Naive thymus-derived CD4-positive, alpha-beta T cell (primary cell): ENCODE measurements at regions of chr1 and their contacts with region 1.

Region 1: GRCh38 chr1:183655562-183656075 is 2.5 kb upstream of the APOBEC4 start:
- DNase-seq: peak; percentile 43 to 74 (median 65)
- ATAC-seq: peak; percentile 88
- H3K4me3 ChIP-seq: no peak overlapping the region
- H3K4me3 Mint-ChIP-seq: no peak overlapping the region
- H3K27ac ChIP-seq: no peak overlapping the region
- H3K27ac Mint-ChIP-seq: peak overlapping the region in 3 of 9 donors; percentile 4 to 60 (median 19)
- H3K4me1 ChIP-seq: peaks cover 18 to 34% of the 10 kb centered on the region in 2 donors
- H3K4me1 Mint-ChIP-seq: peaks cover 22 to 48% (median 36%) of the 10 kb centered on the region in 7 donors
- H3K27me3 ChIP-seq: no peaks in the 10 kb centered on the region
- H3K27me3 Mint-ChIP-seq: peaks cover 0 to 5% (median 0%) of the 10 kb centered on the region in 5 donors

Region 2: DNA sequence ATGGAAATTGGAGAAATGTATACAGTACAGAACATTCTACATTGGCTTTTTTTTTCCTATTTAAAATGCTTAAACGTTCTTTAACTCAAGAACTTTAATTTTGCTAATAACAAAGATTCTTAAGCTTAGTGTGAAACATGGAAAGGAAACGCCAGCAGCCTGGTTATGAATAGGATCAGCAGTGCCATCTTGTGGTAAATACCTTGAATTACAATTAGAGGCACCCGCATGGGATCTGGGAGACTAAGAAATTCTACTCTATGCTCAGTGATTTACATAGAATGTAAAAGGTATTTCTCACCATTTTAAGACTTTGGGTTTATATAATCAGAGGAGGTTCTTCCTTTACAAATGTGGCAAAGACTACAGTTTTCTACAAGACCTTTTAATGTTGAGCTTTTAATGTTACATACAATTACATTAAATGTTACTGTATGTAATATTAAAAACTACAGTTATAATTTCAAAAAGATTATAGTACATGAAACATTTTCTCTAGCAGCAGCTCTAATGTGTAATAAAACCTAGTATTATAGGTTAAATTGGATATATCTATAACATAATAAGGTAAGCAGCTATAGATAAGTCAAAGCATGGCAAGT is 29.6 kb after region 1 on chr1:
- CTCF ChIA-PET with region 1: interaction called, 32 read pairs
- POLR2A ChIA-PET with region 1: interaction called, 3 read pairs
- intact Hi-C with region 1: loop called (anchors 1 kb)
- DNase-seq: peak in 7 of 9 donors; percentile 20 to 63 (median 54)
- ATAC-seq: peak; percentile 86
- H3K4me3 ChIP-seq: no peak overlapping the region
- H3K4me3 Mint-ChIP-seq: no peak overlapping the region
- H3K27ac ChIP-seq: no peak overlapping the region
- H3K27ac Mint-ChIP-seq: no peak overlapping the region
- H3K4me1 ChIP-seq: no peaks in the 10 kb centered on the region
- H3K4me1 Mint-ChIP-seq: peaks cover 0 to 4% (median 0%) of the 10 kb centered on the region in 7 donors
- H3K27me3 ChIP-seq: no peaks in the 10 kb centered on the region
- H3K27me3 Mint-ChIP-seq: peaks cover 0 to 30% (median 0%) of the 10 kb centered on the region in 5 donors

Region 3: DNA sequence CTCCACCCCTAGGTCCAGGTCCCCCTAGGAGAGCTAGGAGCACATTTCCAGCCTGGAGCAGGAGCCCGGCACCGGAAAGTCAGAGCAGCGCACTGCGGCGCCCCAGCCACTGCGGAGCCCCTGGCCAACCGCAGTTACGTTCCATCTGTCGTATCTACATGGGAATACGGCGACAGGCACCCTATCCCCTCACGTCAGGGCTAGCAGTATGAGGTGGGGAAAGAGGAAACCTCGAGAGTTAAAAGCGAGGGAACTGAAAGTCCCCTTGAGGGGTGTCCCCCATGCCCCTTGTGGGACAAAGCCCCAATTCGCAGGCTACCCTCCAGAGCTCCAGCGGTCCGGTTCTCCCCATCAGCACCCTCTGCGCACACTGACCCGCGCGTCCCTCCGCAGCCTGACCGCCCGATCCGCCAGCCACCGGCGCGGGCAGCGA is 380.9 kb after region 1 on chr1:
- CTCF ChIA-PET with region 1: no interaction called
- POLR2A ChIA-PET with region 1: no interaction called
- intact Hi-C with region 1: loop called in 1 of 2 experiments (anchors 5 kb)
- DNase-seq: peak in 3 of 9 donors; percentile 5 to 24 (median 6)
- ATAC-seq: peak; percentile 30
- H3K4me3 ChIP-seq: peak overlapping the region; percentile 47
- H3K4me3 Mint-ChIP-seq: peak overlapping the region; percentile 35 to 75 (median 64)
- H3K27ac ChIP-seq: no peak overlapping the region
- H3K27ac Mint-ChIP-seq: no peak overlapping the region
- H3K4me1 ChIP-seq: peaks cover 6 to 18% of the 10 kb centered on the region in 2 donors
- H3K4me1 Mint-ChIP-seq: peaks cover 10 to 18% (median 15%) of the 10 kb centered on the region in 7 donors
- H3K27me3 ChIP-seq: peaks cover 0 to 3% of the 10 kb centered on the region in 2 donors
- H3K27me3 Mint-ChIP-seq: peaks cover 62 to 83% (median 70%) of the 10 kb centered on the region in 5 donors

Region 4: DNA sequence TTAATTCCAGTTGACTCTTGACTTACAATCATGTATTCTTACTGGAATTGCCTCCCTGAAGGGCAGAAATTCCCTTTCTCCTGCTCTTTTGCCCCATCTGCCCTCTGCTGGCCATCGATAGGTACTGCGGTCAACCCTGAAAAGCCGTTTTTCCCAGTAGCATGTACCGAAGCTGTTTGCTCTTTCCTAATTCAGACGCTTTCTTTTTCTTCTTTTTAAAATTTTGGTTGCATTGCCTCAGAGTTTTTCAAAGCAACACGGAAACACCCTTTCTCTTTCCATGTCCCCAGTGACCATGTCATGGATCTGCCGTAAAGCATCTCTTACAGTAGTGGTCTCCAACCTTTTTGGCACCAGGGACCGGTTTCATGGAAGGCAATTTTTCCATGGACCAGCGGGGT is 567.0 kb after region 1 on chr1:
- CTCF ChIA-PET with region 1: no interaction called
- POLR2A ChIA-PET with region 1: no interaction called
- intact Hi-C with region 1: loop called in 1 of 2 experiments (anchors 1 kb)
- DNase-seq: peak in 6 of 9 donors; percentile 11 to 31 (median 26)
- ATAC-seq: peak; percentile 60
- H3K4me3 ChIP-seq: no peak overlapping the region
- H3K4me3 Mint-ChIP-seq: peak overlapping the region in 2 of 10 donors; percentile 3 to 5
- H3K27ac ChIP-seq: no peak overlapping the region
- H3K27ac Mint-ChIP-seq: peak overlapping the region in 1 of 9 donors; percentile 6
- H3K4me1 ChIP-seq: no peaks in the 10 kb centered on the region
- H3K4me1 Mint-ChIP-seq: peaks cover 0 to 4% (median 0%) of the 10 kb centered on the region in 7 donors
- H3K27me3 ChIP-seq: no peaks in the 10 kb centered on the region
- H3K27me3 Mint-ChIP-seq: peaks cover 0 to 19% (median 9%) of the 10 kb centered on the region in 5 donors

Region 5: GRCh38 chr1:185398599-185398998 is 1743.0 kb after region 1 on chr1:
- CTCF ChIA-PET with region 1: no interaction called
- POLR2A ChIA-PET with region 1: no interaction called
- intact Hi-C with region 1: no loop called
- DNase-seq: no peak
- ATAC-seq: no peak
- H3K4me3 ChIP-seq: no peak overlapping the region
- H3K4me3 Mint-ChIP-seq: no peak overlapping the region
- H3K27ac ChIP-seq: no peak overlapping the region
- H3K27ac Mint-ChIP-seq: no peak overlapping the region
- H3K4me1 ChIP-seq: no peaks in the 10 kb centered on the region
- H3K4me1 Mint-ChIP-seq: peaks cover 0 to 12% (median 5%) of the 10 kb centered on the region in 7 donors
- H3K27me3 ChIP-seq: no peaks in the 10 kb centered on the region
- H3K27me3 Mint-ChIP-seq: peaks cover 0 to 11% (median 0%) of the 10 kb centered on the region in 5 donors